WTC11 (cell line): ENCODE measurements at regions of chr16 and their contacts with region 1.

Region 1: DNA sequence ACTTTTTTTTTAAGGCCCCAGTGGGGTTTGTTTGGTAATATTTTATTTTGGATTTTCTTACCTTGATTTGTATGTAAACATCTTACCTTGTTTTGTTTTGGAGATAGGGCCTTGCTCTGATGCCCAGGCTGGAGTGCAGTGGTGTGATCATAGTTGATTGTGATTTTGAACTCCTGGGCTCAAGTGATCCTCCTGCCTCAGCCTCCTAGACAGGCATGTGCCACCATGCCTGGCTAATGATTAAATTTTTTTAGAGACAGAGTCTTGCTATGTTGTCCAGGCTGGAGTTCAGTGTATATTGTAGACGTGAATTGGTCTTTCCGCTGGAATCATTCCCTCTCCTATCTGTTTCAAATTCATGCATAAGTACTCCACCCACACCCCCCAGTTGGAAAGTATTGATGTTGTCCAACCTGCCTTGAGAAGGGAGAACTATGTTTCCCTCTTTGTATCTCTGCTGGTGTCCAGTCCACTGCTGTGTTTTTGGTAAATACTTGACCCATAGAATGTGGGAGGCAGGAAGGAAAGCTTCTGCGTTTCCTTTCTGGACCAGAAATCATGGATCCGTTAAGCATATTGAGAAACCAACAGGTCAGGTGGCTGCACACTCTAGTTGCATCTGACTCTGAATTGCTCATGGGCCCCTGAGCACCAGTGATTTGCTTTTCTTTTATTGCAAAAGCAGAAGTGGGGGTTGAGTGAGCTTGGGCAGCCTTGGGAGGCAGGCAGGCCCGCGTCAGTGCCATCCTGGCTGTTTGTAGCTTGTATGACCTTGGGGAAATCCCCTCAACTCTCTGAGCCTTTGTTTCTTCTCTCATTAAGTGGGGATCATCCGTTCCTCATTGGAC is 25.0 kb downstream of the RMI2 start:
- DNase-seq: no peak
- ATAC-seq: no peak
- H3K4me3 Mint-ChIP-seq: no peak overlapping the region
- H3K27ac Mint-ChIP-seq: peak overlapping the region; percentile 4; the same call in 1 of the 2 replicates
- H3K4me1 Mint-ChIP-seq: peaks cover 18% of the 10 kb centered on the region
- H3K27me3 Mint-ChIP-seq: no peaks in the 10 kb centered on the region
- CTCF ChIP-seq: no peak

Region 2: DNA sequence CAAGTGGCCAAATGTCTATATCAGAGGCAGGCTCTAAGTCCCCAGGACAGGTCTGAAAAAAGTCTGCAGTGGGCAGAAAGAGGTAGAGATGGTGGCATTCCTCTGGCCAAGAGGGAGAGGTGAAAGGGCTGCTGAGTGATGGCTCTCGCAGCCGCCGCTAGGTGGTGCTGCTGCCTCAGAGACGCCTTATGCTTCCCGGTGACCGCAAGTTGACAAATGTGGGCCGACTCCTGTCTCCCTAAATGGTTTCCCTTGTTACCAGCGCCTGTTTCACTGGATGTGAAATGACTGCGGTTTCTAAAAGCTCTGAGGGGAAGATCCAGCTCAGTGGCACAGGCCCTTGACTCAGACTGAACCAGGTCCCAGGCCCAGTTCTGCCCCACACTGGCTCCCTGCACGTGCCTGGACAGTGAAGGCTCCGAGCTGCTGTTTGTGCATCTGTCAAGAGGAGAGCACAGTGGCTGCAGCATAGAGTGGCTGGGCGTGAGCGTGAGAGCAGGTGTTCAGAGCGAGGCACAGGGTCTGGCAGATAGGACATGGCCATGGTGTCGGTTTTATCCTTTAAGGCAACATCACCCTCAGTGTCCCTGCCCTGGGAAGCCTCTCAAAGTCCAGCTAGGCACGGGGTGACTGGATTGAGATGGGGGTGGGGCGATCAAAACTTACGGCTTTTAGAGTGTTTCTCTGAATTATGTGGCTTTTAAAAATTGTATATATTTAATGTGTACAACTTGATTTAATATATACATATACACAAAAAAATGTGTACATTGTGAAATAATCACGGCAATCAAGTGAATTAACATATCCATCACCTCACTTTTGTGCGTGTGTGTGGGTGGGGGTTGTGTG is 406.0 kb before region 1 on chr16:
- CTCF ChIA-PET with region 1: interaction called, 16 read pairs
- POLR2A ChIA-PET with region 1: no interaction called
- DNase-seq: peak; percentile 85
- ATAC-seq: peak; percentile 91
- H3K4me3 Mint-ChIP-seq: no peak overlapping the region
- H3K27ac Mint-ChIP-seq: no peak overlapping the region
- H3K4me1 Mint-ChIP-seq: peaks cover 4% of the 10 kb centered on the region
- H3K27me3 Mint-ChIP-seq: no peaks in the 10 kb centered on the region
- CTCF ChIP-seq: peak; percentile 96

Region 3: DNA sequence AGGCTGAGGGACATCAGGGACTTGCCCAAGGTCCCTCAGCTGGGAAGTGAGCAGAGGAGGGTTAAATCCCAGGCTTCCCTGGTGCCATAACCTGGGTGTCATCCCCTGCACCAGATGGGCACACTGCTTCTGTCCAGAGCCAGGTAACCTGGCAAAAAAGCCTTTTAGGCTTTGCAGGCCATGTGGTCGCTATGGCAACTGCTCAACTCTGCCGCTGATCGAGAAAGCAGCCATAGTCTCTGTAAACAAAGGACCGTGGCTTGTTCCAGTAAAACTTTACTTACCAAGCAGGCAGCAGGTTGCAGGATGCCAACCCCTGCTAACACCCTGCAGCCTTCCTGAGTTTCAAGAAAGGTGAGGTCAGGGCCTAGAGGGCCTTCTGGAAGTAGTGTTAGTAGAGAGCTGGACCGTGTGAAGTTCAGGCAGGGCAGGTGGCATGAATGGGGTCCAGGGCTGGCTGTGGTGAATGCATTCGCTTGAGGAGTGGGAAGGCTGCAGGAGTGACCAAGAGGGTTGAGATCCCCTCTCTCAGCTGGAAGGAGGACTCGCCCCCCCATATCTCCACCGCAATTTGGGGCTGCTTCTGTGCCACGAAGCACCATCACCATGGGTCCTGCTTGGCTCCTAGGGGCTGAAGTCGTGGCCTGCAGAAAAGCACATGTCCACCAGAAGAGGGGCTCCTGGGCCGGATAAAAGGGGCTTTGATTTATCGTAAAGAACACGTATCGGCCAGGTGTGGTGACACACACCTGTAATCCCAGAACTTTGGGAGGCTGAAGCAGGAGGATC is 205.6 kb before region 1 on chr16:
- CTCF ChIA-PET with region 1: interaction called, 13 read pairs
- POLR2A ChIA-PET with region 1: no interaction called
- DNase-seq: no peak
- ATAC-seq: no peak
- H3K4me3 Mint-ChIP-seq: no peak overlapping the region
- H3K27ac Mint-ChIP-seq: no peak overlapping the region
- H3K4me1 Mint-ChIP-seq: no peaks in the 10 kb centered on the region
- H3K27me3 Mint-ChIP-seq: no peaks in the 10 kb centered on the region; the same call in 1 of the 2 replicates
- CTCF ChIP-seq: no peak

Region 4: DNA sequence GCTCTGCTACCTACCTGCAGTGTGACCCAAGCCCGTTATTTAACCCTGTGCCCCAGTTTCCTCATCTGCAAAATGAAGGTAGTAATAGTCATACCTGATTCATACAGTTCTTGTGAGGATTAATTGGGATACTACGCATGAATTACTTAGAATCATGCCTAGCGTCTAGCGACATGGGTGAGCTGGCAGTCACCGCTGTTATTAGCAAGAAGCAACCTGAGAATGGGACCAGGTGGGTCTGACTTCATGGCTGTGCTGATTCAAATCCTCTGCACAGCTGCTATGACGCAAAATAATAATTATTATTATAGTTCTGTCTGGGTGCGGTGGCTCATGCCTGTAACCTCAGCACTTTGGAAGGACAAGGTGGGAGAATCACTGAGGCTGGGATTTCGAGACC is 122.2 kb before region 1 on chr16:
- CTCF ChIA-PET with region 1: interaction called, 16 read pairs
- POLR2A ChIA-PET with region 1: no interaction called
- DNase-seq: no peak
- ATAC-seq: no peak
- H3K4me3 Mint-ChIP-seq: no peak overlapping the region
- H3K27ac Mint-ChIP-seq: no peak overlapping the region
- H3K4me1 Mint-ChIP-seq: peaks cover 22% of the 10 kb centered on the region
- H3K27me3 Mint-ChIP-seq: no peaks in the 10 kb centered on the region
- CTCF ChIP-seq: no peak

Region 5: GRCh38 chr16:11297492-11298142 is 72.7 kb before region 1 on chr16:
- CTCF ChIA-PET with region 1: interaction called, 15 read pairs
- POLR2A ChIA-PET with region 1: no interaction called
- DNase-seq: peak; percentile 69
- ATAC-seq: peak; percentile 87
- H3K4me3 Mint-ChIP-seq: no peak overlapping the region
- H3K27ac Mint-ChIP-seq: no peak overlapping the region
- H3K4me1 Mint-ChIP-seq: peaks cover 33% of the 10 kb centered on the region
- H3K27me3 Mint-ChIP-seq: no peaks in the 10 kb centered on the region; the same call in 1 of the 2 replicates
- CTCF ChIP-seq: no peak

Region 6: GRCh38 chr16:11356573-11357331 is 13.6 kb before region 1 on chr16:
- CTCF ChIA-PET with region 1: interaction called, 27 read pairs
- POLR2A ChIA-PET with region 1: no interaction called
- DNase-seq: peak; percentile 80
- ATAC-seq: peak; percentile 90
- H3K4me3 Mint-ChIP-seq: no peak overlapping the region
- H3K27ac Mint-ChIP-seq: no peak overlapping the region
- H3K4me1 Mint-ChIP-seq: peaks cover 58% of the 10 kb centered on the region
- H3K27me3 Mint-ChIP-seq: no peaks in the 10 kb centered on the region
- CTCF ChIP-seq: peak; percentile 38; the same call in 1 of the 2 replicates